CD4-positive, alpha-beta T cell (primary cell): ENCODE measurements at regions of chr6 and their contacts with region 1.

Region 1: DNA sequence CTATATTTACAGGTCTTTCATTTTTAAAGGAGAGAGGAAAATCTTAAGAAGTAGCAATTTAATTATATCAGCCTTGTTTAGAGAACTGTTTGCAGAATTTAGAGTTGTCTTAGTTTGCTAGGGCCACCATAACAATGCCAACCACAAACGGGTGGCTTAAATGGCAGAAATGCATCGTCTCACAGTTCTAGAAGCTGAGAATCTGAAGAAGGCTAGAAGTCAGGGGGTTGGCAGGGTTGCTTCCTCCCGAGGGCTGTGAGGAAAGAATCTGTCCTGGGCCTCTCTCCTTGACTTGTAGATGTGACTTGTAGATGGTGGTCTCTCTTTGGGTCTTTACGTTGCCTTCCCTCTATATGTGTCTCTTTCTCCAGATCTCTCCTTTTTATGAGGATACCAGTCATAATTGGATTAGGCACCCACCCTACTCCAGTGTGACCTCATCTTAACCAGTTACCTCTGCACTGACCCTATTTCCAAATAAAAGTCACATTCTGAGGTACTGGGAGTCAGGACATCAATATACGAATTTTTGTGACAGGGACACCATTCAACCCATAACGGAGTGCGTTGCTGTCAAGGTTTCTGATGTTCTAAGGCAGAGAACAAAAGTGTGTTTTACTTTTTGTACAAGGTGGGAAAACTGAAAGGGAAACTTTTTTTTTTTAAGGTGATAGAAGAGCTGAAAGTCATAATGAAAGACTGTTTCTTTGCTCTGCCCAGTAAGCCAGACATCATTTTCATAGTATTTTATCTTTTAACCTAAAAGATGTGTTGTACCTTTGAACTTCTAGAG is 84.4 kb downstream of the SAMD3 start:
- DNase-seq: peak in 2 of 14 experiments; percentile 16 to 52
- ATAC-seq: no peak
- H3K4me3 ChIP-seq: peak overlapping the region; percentile 23
- H3K4me3 Mint-ChIP-seq: peak overlapping the region; percentile 79
- H3K27ac ChIP-seq: peak overlapping the region; percentile 10 to 33
- H3K27ac Mint-ChIP-seq: peak overlapping the region; percentile 92
- H3K4me1 ChIP-seq: peaks cover 25% of the 10 kb centered on the region
- H3K4me1 Mint-ChIP-seq: peaks cover 82% of the 10 kb centered on the region
- H3K27me3 ChIP-seq: no peaks in the 10 kb centered on the region
- H3K27me3 Mint-ChIP-seq: no peaks in the 10 kb centered on the region
- CTCF ChIP-seq: no peak

Region 2: DNA sequence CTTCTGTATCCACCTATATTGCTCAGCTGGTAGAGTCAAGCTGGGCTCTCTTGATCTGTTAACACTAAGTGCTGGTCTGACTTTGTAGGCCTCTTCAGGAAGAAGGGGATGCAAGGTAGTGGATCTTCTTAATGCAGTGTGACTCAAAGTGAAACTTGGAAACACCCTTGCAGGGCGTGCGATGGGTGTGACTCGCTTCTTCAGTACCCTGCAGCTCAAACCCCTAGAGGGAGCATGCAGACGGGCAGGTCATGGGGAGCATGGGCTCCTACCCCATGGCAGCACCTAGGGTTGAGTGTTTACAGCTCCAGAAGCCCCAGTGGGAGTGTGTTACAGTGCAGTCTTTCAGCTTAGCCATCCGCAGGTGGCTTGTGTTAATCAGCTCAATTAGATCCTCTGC is 85.2 kb after region 1 on chr6:
- CTCF ChIA-PET with region 1: no interaction called
- POLR2A ChIA-PET with region 1: interaction called, 5 read pairs
- intact Hi-C with region 1: loop called in 1 of 2 experiments (anchors 5 kb)
- DNase-seq: peak; percentile 20 to 89 (median 53)
- ATAC-seq: peak; percentile 93
- H3K4me3 ChIP-seq: peak overlapping the region; percentile 48
- H3K4me3 Mint-ChIP-seq: peak overlapping the region; percentile 77
- H3K27ac ChIP-seq: peak overlapping the region; percentile 13 to 67
- H3K27ac Mint-ChIP-seq: peak overlapping the region; percentile 92
- H3K4me1 ChIP-seq: peaks cover 19% of the 10 kb centered on the region
- H3K4me1 Mint-ChIP-seq: peaks cover 41% of the 10 kb centered on the region
- H3K27me3 ChIP-seq: no peaks in the 10 kb centered on the region
- H3K27me3 Mint-ChIP-seq: no peaks in the 10 kb centered on the region
- CTCF ChIP-seq: no peak